ENCODE measurements at regions of chr12 and their contacts with region 1.

Region 1: DNA sequence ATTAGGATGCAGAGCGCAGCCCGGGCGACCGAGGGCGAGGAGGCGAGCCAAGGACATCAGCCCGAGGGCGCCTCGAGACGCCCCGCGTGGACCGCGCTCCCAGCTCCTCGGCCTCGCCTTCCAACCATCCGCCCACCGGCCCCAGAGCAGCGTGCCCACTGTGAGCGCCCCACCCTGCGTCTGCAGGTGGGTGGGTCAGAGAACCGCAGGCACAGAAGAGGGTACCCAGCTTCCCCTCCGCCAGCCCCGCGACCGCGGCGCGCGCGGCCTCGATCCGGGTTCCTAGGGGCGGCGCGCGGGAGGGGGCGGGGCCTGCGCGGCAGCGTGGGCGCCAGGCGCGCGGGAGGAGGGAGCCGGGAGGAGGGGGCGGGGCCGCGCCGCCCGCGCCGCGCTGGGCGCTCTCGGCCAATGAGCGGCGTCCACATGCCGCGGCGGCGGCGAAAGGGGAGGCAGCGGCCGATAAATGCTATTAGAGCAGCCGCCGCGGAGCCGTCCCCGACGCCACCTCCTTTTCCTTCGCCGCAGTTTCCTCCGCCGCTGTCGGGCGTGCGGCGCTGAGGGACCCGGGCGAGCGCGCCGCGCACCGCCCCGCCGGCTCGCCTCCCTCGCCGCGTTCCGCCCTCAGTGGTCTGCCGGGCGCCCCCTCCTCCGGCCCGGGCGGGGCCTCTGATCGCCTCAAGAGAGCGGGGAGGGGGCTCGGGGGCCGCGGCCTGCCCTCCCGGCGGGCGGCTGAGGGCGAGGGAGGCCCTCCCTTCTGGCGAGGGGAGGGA is at the start of gene ATP2A2:
- DNase-seq: peak; percentile 91
- ATAC-seq: peak; percentile 84
- H3K4me3 Mint-ChIP-seq: peak within 1 kb of the TSS; percentile 96
- H3K27ac Mint-ChIP-seq: peak within 1 kb of the TSS; percentile 97
- H3K4me1 Mint-ChIP-seq: peaks cover 45% of the 10 kb centered on the region
- H3K27me3 Mint-ChIP-seq: no peaks in the 10 kb centered on the region
- CTCF ChIP-seq: no peak
- total RNA-seq, gene ATP2A2: 94.8 and 100 TPM in 2 replicates

Region 2: GRCh38 chr12:109625131-109625559 is 655.8 kb before region 1 on chr12:
- CTCF ChIA-PET with region 1: no interaction called
- POLR2A ChIA-PET with region 1: no interaction called
- intact Hi-C with region 1: no loop called
- DNase-seq: no peak
- ATAC-seq: no peak
- H3K4me3 Mint-ChIP-seq: no peak overlapping the region
- H3K27ac Mint-ChIP-seq: no peak overlapping the region
- H3K4me1 Mint-ChIP-seq: peaks cover 3% of the 10 kb centered on the region
- H3K27me3 Mint-ChIP-seq: peaks cover 17% of the 10 kb centered on the region
- CTCF ChIP-seq: no peak

Region 3: GRCh38 chr12:109995686-109996482 is 285.1 kb before region 1 on chr12 and contains the start of gene GIT2:
- CTCF ChIA-PET with region 1: no interaction called
- POLR2A ChIA-PET with region 1: interaction called, 4 read pairs
- intact Hi-C with region 1: loop called (anchors 2 kb)
- DNase-seq: peak; percentile 86
- ATAC-seq: peak; percentile 72
- H3K4me3 Mint-ChIP-seq: peak within 1 kb of the TSS; percentile 96
- H3K27ac Mint-ChIP-seq: peak within 1 kb of the TSS; percentile 95
- H3K4me1 Mint-ChIP-seq: peaks cover 80% of the 10 kb centered on the region
- H3K27me3 Mint-ChIP-seq: no peaks in the 10 kb centered on the region
- CTCF ChIP-seq: no peak
- total RNA-seq, gene GIT2: 89.2 and 107 TPM in 2 replicates

Region 4: DNA sequence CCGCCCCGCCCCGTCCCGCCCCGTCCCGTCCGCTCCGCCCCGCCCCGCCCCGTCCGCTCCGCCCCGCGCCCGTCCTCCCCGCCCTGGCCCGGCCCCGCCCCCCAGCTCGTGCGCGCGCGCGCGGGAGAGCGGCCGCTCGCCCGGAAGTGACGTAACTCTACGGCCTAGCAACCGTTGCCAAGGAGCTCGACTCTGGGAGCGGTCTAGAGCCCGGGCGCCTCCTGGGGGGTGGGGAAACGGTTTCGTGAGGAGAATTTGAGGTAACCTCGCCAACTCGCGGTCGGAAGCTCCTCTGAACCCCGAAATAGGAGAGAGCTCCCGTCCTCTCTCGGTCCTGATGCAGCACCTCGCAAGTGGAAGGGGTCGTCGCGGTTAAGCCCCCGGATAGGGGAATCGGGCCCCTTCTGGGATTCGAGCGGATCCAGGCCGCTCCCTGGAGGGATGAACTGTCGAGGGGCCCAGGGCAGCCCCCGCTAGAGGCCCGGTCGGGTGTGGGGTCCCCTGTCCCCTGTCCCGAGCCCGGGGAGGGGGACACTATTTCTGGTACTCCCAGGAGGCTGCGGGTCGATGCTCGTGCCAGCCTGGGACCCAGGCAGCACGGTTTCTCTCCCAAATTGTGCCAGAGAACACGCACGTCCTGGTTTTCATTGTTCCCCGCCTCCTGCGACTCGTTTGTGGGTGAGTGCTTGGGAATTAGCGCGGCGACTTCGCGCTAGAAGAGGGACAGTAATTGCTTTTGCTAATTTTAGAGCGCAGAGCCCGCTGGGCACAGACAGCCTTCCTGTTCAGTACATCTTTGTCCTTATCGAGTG is 156.6 kb before region 1 on chr12 and contains the start of gene IFT81:
- CTCF ChIA-PET with region 1: no interaction called
- POLR2A ChIA-PET with region 1: interaction called, 18 read pairs
- intact Hi-C with region 1: loop called (anchors 1 kb)
- DNase-seq: peak; percentile 95
- ATAC-seq: peak; percentile 91
- H3K4me3 Mint-ChIP-seq: peak within 1 kb of the TSS; percentile 92
- H3K27ac Mint-ChIP-seq: peak within 1 kb of the TSS; percentile 79
- H3K4me1 Mint-ChIP-seq: peaks cover 8% of the 10 kb centered on the region
- H3K27me3 Mint-ChIP-seq: no peaks in the 10 kb centered on the region
- CTCF ChIP-seq: no peak
- total RNA-seq, gene IFT81: 4.3 and 4.4 TPM in 2 replicates

Region 5: DNA sequence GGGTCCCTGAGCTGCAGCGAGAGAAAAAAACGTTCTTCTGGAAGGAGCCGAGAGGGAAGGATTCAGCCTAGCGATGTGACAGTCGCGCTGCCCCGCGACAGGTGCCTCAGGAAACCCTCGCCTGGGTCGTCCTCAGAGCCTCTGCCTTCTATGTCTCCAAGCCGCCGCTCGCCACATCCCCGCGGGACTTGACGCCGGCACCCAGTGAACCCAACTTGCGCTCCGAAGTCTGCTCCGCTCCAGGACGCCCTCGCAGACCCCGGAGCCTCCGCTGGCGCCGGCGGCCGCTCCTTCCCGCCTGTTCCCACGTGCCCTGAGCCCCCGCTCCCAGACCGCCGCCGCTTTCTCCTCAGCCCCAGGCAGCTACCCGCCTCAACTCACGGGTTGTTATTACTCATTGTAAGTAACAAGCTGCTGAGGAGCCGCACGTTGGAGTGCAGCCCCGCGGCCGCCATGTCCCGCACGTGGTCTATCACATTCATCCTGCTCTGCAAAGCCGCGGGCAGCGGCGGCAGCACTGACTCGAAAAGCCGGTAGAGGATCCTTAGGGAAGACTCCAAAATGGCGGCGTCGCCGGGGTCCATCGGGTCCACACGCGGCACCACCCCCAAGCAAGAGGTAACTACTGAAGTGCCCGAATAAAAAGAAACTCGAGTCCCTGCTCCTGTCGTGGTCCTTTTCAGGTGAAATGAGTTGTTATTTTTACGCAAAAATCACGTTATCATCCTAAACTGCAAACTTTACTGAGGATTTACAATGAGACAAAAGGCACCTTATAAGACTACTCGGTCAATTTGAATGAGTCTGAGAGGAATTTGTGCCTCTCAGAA is 122.4 kb after region 1 on chr12 and contains the start of gene ANAPC7:
- CTCF ChIA-PET with region 1: no interaction called
- POLR2A ChIA-PET with region 1: interaction called, 6 read pairs
- intact Hi-C with region 1: loop called (anchors 2 kb)
- DNase-seq: peak; percentile 73
- ATAC-seq: peak; percentile 94
- H3K4me3 Mint-ChIP-seq: peak within 1 kb of the TSS; percentile 99
- H3K27ac Mint-ChIP-seq: peak within 1 kb of the TSS; percentile 99
- H3K4me1 Mint-ChIP-seq: peaks cover 33% of the 10 kb centered on the region
- H3K27me3 Mint-ChIP-seq: no peaks in the 10 kb centered on the region
- CTCF ChIP-seq: no peak
- total RNA-seq, gene ANAPC7: 69.8 and 76.2 TPM in 2 replicates

Region 6: GRCh38 chr12:110501752-110502738 is 221.1 kb after region 1 on chr12 and contains the starts of genes RAD9B and VPS29:
- CTCF ChIA-PET with region 1: no interaction called
- POLR2A ChIA-PET with region 1: no interaction called
- intact Hi-C with region 1: loop called (anchors 1 kb)
- DNase-seq: peak; percentile 95
- ATAC-seq: peak; percentile 95
- H3K4me3 Mint-ChIP-seq: peak within 1 kb of the TSS; percentile 99
- H3K27ac Mint-ChIP-seq: peak within 1 kb of the TSS; percentile 96
- H3K4me1 Mint-ChIP-seq: peaks cover 36% of the 10 kb centered on the region
- H3K27me3 Mint-ChIP-seq: no peaks in the 10 kb centered on the region
- CTCF ChIP-seq: no peak
- total RNA-seq, gene RAD9B: 1.2 and 1.3 TPM in 2 replicates
- total RNA-seq, gene VPS29: 99.6 and 117 TPM in 2 replicates

Region 7: GRCh38 chr12:110742718-110743570 is 462.0 kb after region 1 on chr12 and contains the start of gene PPP1CC:
- CTCF ChIA-PET with region 1: no interaction called
- POLR2A ChIA-PET with region 1: interaction called, 4 read pairs
- intact Hi-C with region 1: loop called (anchors 2 kb)
- DNase-seq: peak; percentile 82
- ATAC-seq: peak; percentile 94
- H3K4me3 Mint-ChIP-seq: peak within 1 kb of the TSS; percentile 98
- H3K27ac Mint-ChIP-seq: peak within 1 kb of the TSS; percentile 93
- H3K4me1 Mint-ChIP-seq: peaks cover 44% of the 10 kb centered on the region
- H3K27me3 Mint-ChIP-seq: no peaks in the 10 kb centered on the region
- CTCF ChIP-seq: no peak
- total RNA-seq, gene PPP1CC: 148 and 152 TPM in 2 replicates